H1 (cell line): ENCODE measurements at regions of chr11 and their contacts with region 1.

Region 1: GRCh38 chr11:43282607-43283440 is 29.0 kb upstream of the API5 start:
- DNase-seq: peak in 1 of 2 experiments; percentile 76
- H3K4me3 ChIP-seq: no peak overlapping the region
- H3K27ac ChIP-seq: no peak overlapping the region
- H3K4me1 ChIP-seq: peaks cover 0 to 5% (median 3%) of the 10 kb centered on the region in 4 experiments; a peak in 4 of 7 replicates
- H3K27me3 ChIP-seq: no peaks in the 10 kb centered on the region
- CTCF ChIP-seq: peak; percentile 67 to 78 (median 75)
- EP300 ChIP-seq: no peak
- POLR2A ChIP-seq: no peak
- RAD21 ChIP-seq: peak; percentile 90 to 91

Region 2: DNA sequence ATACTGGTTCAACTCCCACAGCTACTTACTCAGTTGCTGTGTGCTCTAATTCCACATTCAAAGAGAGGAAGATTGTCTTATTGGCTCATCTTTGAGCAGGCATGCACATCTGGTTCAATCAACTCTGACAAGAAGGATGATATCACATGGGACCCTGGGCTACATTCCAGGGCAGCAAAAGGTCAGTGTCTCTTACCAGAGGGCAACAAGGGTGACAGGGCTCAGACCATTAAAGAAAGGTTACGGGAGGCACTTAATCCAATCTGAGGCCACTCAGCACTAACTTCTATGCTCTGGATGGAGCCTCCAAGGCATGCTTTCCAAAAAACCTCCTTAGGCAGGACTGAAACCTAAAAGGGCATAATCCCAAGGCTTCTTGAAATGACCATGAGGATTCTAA is 520.5 kb before region 1 on chr11:
- CTCF ChIA-PET with region 1: interaction called, 11 read pairs
- POLR2A ChIA-PET with region 1: interaction called, 3 read pairs
- DNase-seq: no peak
- H3K4me3 ChIP-seq: no peak overlapping the region
- H3K27ac ChIP-seq: no peak overlapping the region
- H3K4me1 ChIP-seq: no peaks in the 10 kb centered on the region
- H3K27me3 ChIP-seq: no peaks in the 10 kb centered on the region
- CTCF ChIP-seq: no peak
- EP300 ChIP-seq: no peak
- POLR2A ChIP-seq: no peak
- RAD21 ChIP-seq: no peak

Region 3: GRCh38 chr11:42974505-42975504 is 308.0 kb before region 1 on chr11:
- CTCF ChIA-PET with region 1: interaction called, 42 read pairs
- POLR2A ChIA-PET with region 1: no interaction called
- DNase-seq: peak in 1 of 2 experiments; percentile 23
- H3K4me3 ChIP-seq: no peak overlapping the region
- H3K27ac ChIP-seq: no peak overlapping the region
- H3K4me1 ChIP-seq: no peaks in the 10 kb centered on the region
- H3K27me3 ChIP-seq: no peaks in the 10 kb centered on the region
- CTCF ChIP-seq: peak; percentile 32 to 77 (median 65)
- EP300 ChIP-seq: no peak
- POLR2A ChIP-seq: no peak
- RAD21 ChIP-seq: peak; percentile 58 to 70

Region 4: GRCh38 chr11:43130616-43131015 is 152.2 kb before region 1 on chr11:
- CTCF ChIA-PET with region 1: interaction called, 30 read pairs
- POLR2A ChIA-PET with region 1: no interaction called
- DNase-seq: no peak
- H3K4me3 ChIP-seq: no peak overlapping the region
- H3K27ac ChIP-seq: no peak overlapping the region
- H3K4me1 ChIP-seq: no peaks in the 10 kb centered on the region
- H3K27me3 ChIP-seq: no peaks in the 10 kb centered on the region
- CTCF ChIP-seq: peak in 2 of 3 experiments; percentile 42 to 45; a peak in 3 of 4 replicates
- EP300 ChIP-seq: no peak
- POLR2A ChIP-seq: no peak
- RAD21 ChIP-seq: peak; percentile 65 to 76

Region 5: DNA sequence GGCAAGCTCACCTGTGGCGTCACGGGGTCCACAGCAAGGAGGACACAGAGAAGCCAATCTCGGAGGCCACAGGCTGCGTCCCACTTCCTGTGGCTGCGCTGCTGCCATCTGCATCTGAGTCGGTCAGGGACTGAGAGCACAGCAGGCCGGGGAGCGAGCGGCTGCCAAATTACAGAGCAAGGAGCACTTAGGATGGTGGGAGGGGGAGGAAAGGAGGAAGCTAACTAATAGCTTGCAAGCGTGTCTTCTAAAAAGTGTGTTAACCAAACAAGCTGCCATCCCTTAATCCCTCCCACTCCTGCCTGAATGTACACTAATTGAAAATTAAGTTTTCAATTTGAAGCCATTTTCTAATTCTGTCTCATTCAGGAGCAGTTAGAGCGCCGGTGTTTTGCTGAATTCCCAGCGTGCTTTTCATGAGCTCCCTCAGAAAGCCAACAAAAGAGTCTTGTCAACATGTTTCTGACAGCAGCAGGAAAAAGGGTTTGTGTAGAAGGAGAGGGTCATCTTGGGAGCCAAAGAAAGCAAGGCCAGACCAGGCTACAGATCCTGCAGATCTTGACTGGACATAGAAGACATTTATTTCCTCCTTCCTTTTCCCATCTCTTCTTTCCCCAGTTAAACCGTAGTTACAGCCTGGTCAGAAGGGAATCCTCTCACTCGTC is 13.4 kb before region 1 on chr11:
- CTCF ChIA-PET with region 1: interaction called, 33 read pairs
- POLR2A ChIA-PET with region 1: no interaction called
- DNase-seq: no peak
- H3K4me3 ChIP-seq: peak overlapping the region in 1 of 4 experiments; percentile 25; a peak in 1 of 8 replicates
- H3K27ac ChIP-seq: no peak overlapping the region
- H3K4me1 ChIP-seq: peaks cover 0 to 3% (median 1%) of the 10 kb centered on the region in 4 experiments; a peak in 3 of 7 replicates
- H3K27me3 ChIP-seq: no peaks in the 10 kb centered on the region
- CTCF ChIP-seq: no peak
- EP300 ChIP-seq: no peak
- POLR2A ChIP-seq: no peak
- RAD21 ChIP-seq: no peak

Region 6: GRCh38 chr11:43664295-43664694 is 381.5 kb after region 1 on chr11:
- CTCF ChIA-PET with region 1: no interaction called
- POLR2A ChIA-PET with region 1: no interaction called
- DNase-seq: no peak
- H3K4me3 ChIP-seq: no peak overlapping the region
- H3K27ac ChIP-seq: no peak overlapping the region
- H3K4me1 ChIP-seq: peaks cover 0 to 3% (median 0%) of the 10 kb centered on the region in 4 experiments; a peak in 1 of 7 replicates
- H3K27me3 ChIP-seq: no peaks in the 10 kb centered on the region
- CTCF ChIP-seq: no peak
- EP300 ChIP-seq: no peak
- POLR2A ChIP-seq: no peak
- RAD21 ChIP-seq: no peak